ENCODE measurements at regions of chr5 and their contacts with region 1.

Region 1: GRCh38 chr5:159451197-159452052 is 121.1 kb upstream of the IL12B start:
- DNase-seq: peak; percentile 88
- H3K4me3 ChIP-seq: no peak overlapping the region
- H3K27ac ChIP-seq: peak overlapping the region; percentile 88
- H3K27me3 ChIP-seq: peaks cover 2% of the 10 kb centered on the region
- CTCF ChIP-seq: no peak

Region 2: GRCh38 chr5:158979749-158980521 is 471.5 kb before region 1 on chr5:
- CTCF ChIA-PET with region 1: no interaction called
- POLR2A ChIA-PET with region 1: no interaction called
- DNase-seq: no peak
- H3K4me3 ChIP-seq: peak overlapping the region; percentile 33
- H3K27ac ChIP-seq: no peak overlapping the region
- H3K27me3 ChIP-seq: no peaks in the 10 kb centered on the region
- CTCF ChIP-seq: no peak

Region 3: DNA sequence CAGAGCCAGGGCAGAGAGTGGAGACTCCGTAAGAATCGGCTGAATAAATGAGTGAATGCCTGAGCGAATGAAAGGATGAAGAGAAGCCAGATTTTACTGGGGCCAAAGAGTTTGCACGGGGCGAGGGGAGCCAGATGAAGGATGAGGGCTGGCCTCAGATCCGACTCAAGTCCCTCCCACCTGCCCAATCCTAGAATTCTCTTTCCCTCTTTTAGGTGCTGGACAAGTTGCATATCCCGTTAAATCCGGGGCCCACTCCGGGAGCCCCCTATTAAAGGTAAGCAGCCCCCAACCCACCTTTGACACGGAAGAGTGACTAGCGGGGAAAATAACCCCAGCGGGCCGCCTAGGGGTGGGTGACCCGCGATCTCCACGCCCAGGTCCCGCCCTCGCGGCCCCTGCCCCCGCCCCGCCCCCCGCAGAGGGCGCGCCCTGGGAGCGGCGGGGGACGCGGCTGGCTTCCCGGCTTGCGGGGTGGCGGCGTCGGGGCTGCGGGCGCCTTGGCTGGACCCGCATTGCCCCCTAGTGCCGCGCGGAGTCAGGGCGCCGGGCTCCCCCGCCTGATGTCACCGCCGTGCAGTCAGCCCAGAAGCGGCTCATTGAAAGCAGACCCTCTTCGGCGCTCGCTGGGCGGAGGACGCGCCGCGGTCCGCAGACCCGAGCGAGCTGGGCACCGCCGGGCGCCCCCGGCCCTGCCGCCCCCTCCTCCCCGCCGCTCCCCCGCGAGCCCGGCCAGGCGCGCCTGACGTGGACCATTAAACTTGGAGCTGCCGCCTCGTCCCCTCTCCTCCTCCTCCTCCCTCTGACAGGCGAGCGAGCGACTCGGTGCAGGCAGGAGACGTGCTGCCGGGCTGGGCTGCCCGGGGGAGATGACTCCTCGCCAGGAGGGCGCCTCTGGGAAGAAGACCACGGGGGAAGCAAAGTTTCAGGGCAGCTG is 464.7 kb after region 1 on chr5 and contains the start of gene ADRA1B:
- CTCF ChIA-PET with region 1: interaction called, 11 read pairs
- POLR2A ChIA-PET with region 1: no interaction called
- DNase-seq: no peak
- H3K4me3 ChIP-seq: peak within 1 kb of the TSS; percentile 57
- H3K27ac ChIP-seq: no peak within 1 kb of the TSS
- H3K27me3 ChIP-seq: no peaks in the 10 kb centered on the region
- CTCF ChIP-seq: peak; percentile 54
- polyA plus RNA-seq, gene ADRA1B: 0.58 and 0.98 TPM in 2 replicates

Measured in AG04450 (cell line).